Sciatic nerve (tissue), 2 donors: ENCODE measurements at regions of chr7 and their contacts with region 1.

Region 1: DNA sequence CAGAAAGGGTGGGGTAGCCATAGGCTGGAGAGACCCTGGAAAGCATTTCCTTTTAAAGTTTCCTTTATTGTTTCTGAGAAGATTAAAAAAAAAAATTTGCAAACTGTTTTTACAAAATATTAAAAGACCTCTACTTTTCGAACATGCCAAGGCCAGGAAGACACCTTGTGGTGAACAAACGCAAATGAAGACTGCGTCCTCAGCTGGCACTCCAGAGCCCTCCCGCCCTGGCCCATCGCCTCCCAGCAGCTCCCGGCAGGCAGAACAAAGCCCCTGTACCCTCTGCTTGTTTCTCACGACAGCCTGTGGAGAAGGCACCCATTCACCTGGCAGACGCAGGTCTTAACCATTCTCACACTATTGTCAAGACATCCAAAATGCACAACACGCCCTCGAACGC is 56.4 kb downstream of the ESYT2 start:
- DNase-seq: no peak
- ATAC-seq: no peak

Region 2: GRCh38 chr7:157520249-157520648 is 1252.7 kb before region 1 on chr7:
- intact Hi-C with region 1: loop called (anchors 5 kb)
- DNase-seq: peak; percentile 13
- ATAC-seq: no peak

Region 3: DNA sequence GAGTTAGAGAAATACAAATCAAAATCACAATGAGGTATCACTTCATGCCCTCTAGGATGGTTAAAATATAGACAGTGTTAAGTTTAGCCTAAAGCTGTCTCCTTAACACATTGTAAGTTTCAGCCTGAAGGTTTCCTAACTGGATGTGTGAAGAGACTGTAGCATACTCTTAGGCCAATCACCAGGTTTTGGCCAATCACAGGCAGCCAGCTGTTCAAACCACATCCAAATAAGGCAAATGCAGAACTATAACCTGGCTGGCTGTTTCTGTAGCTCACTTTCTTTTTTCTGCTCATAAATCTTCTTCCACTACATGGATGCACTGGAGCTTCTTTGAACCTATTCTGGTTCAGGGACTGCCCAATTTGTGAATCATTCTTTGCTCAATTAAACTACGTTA is 36.7 kb after region 1 on chr7:
- intact Hi-C with region 1: no loop called
- DNase-seq: no peak
- ATAC-seq: no peak

Region 4: GRCh38 chr7:158847451-158847866 is 74.5 kb after region 1 on chr7:
- intact Hi-C with region 1: no loop called
- DNase-seq: no peak
- ATAC-seq: peak; percentile 74